ENCODE measurements at regions of chr6 and their contacts with region 1.

Region 1: DNA sequence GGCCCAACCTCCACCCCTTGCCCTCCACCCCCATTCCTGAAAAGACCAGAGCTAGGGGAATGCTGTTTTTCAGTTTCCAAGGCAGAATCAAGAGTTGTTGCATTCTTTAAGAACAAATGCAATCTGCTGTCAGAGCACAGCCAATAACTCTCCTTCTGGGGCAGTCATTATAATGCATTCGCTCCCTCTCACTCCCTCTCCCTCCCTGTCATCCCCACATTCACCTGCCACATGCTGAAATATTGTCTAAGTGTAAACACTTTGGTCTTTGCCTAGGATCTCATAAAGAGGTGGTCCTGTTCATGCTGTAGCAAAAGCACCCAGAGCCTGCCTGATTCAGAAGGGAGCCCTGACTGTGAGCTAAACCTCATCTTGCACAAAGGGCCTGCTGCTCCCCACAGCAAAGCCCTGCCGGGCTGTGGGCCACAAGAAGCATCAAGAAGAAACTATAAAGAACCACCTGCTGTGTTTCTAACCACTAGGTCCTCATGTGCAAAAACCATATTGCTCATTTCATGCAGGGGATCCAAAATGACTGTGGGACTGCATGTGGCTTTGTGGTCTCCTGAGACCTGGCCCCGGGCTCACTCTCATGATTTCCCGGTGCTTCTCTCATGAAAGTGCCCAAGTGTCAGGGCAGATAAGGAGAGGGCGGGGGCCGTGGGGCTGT is 85.6 kb downstream of the GPR6 start:
- DNase-seq: no peak
- H3K4me3 ChIP-seq: no peak overlapping the region
- H3K27ac ChIP-seq: no peak overlapping the region
- H3K4me1 ChIP-seq: no peaks in the 10 kb centered on the region
- H3K27me3 ChIP-seq: no peaks in the 10 kb centered on the region
- CTCF ChIP-seq: no peak
- EP300 ChIP-seq: no peak
- POLR2A ChIP-seq: no peak

Region 2: GRCh38 chr6:109944448-109944847 is 119.3 kb before region 1 on chr6:
- intact Hi-C with region 1: no loop called
- DNase-seq: no peak
- H3K4me3 ChIP-seq: no peak overlapping the region
- H3K27ac ChIP-seq: no peak overlapping the region
- H3K4me1 ChIP-seq: no peaks in the 10 kb centered on the region
- H3K27me3 ChIP-seq: no peaks in the 10 kb centered on the region
- CTCF ChIP-seq: no peak
- EP300 ChIP-seq: no peak
- POLR2A ChIP-seq: no peak

Region 3: DNA sequence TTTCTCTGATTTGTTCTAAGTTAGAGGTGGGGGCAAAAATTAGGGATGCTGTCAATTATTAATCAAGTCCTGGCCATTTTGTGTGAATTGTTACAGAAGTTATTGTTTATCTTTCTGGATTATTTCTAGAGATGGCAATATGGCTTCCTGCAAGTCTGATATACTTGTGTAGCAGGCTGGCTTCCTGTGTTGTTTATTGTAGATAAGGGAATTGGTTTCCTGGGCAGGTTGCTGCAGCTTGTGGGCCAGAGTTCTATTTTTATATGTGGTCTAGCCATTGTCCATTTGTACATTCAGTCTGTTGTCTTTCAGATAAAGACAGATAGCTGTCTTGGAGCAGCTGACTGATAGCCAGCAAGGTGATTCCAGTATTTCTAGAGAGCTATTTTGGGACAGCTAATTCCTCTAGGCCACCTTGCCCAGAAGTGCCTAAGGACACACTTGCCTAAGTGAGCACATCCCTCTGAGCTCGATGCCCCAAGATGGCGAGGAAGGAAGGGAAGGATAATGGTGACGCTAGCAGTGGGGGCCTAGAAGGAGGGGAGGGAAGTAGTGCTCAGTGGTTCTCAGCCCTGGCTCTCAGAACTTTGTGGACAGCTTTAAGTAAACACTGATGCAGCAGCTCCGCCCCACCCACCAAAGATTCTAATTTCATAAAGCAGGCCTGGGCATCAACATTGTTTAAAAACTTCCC is 326.1 kb after region 1 on chr6:
- intact Hi-C with region 1: loop called in 2 of 4 experiments (anchors 10 kb)
- DNase-seq: no peak
- H3K4me3 ChIP-seq: no peak overlapping the region
- H3K27ac ChIP-seq: no peak overlapping the region
- H3K4me1 ChIP-seq: peaks cover 3% of the 10 kb centered on the region
- H3K27me3 ChIP-seq: no peaks in the 10 kb centered on the region
- CTCF ChIP-seq: no peak
- EP300 ChIP-seq: no peak
- POLR2A ChIP-seq: no peak

Region 4: GRCh38 chr6:110398778-110399177 is 335.0 kb after region 1 on chr6:
- intact Hi-C with region 1: loop called in 1 of 4 experiments (anchors 10 kb)
- DNase-seq: no peak
- H3K4me3 ChIP-seq: no peak overlapping the region
- H3K27ac ChIP-seq: peak overlapping the region in 1 of 2 donors; percentile 43
- H3K4me1 ChIP-seq: peaks cover 11% of the 10 kb centered on the region
- H3K27me3 ChIP-seq: no peaks in the 10 kb centered on the region
- CTCF ChIP-seq: no peak
- EP300 ChIP-seq: no peak
- POLR2A ChIP-seq: no peak